CD14-positive monocyte (primary cell): ENCODE measurements at regions of chr1 and their contacts with region 1.

Region 1: DNA sequence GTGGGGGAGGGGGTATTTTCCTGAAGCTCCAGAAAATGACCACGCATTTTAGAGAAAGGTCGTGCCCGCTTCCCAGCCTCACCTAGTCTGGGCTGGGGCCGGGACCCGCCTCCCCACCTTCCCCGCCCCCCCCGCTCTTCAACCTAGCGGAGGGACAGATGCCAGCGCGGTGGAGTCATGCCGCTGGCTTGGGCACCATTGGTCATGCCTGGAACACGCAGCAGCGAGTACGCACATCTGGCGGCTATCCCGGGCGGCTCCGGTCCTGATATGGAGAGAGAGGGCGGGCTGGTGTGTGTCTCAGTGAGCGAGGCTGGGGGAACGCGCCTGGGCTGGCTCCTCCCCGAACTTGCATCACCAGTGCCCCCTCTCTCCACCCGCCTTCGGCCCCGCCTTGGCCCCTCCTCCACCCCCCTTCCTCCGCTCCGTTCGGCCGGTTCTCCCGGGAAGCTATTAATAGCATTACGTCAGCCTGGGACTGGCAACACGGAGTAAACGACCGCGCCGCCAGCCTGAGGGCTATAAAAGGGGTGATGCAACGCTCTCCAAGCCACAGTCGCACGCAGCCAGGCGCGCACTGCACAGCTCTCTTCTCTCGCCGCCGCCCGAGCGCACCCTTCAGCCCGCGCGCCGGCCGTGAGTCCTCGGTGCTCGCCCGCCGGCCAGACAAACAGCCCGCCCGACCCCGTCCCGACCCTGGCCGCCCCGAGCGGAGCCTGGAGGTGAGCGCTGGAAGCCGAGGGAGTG is at the start of gene ATF3:
- DNase-seq: peak; percentile 98 to 100 (median 100)
- H3K4me3 ChIP-seq: peak within 1 kb of the TSS; percentile 70 to 94 (median 83)
- H3K4me3 Mint-ChIP-seq: peak within 1 kb of the TSS; percentile 95 to 97
- H3K27ac ChIP-seq: peak within 1 kb of the TSS; percentile 84 to 91
- H3K27ac Mint-ChIP-seq: peak within 1 kb of the TSS; percentile 90 to 98 (median 95)
- H3K4me1 ChIP-seq: peaks cover 29 to 38% of the 10 kb centered on the region in 2 donors
- H3K4me1 Mint-ChIP-seq: peaks cover 46% of the 10 kb centered on the region
- H3K27me3 ChIP-seq: peaks cover 50 to 78% of the 10 kb centered on the region in 2 donors
- H3K27me3 Mint-ChIP-seq: peaks cover 69 to 84% (median 84%) of the 10 kb centered on the region in 3 donors
- CTCF ChIP-seq: no peak
- polyA plus RNA-seq, gene ATF3: 10.4 to 227 (median 13.3) TPM

Region 2: DNA sequence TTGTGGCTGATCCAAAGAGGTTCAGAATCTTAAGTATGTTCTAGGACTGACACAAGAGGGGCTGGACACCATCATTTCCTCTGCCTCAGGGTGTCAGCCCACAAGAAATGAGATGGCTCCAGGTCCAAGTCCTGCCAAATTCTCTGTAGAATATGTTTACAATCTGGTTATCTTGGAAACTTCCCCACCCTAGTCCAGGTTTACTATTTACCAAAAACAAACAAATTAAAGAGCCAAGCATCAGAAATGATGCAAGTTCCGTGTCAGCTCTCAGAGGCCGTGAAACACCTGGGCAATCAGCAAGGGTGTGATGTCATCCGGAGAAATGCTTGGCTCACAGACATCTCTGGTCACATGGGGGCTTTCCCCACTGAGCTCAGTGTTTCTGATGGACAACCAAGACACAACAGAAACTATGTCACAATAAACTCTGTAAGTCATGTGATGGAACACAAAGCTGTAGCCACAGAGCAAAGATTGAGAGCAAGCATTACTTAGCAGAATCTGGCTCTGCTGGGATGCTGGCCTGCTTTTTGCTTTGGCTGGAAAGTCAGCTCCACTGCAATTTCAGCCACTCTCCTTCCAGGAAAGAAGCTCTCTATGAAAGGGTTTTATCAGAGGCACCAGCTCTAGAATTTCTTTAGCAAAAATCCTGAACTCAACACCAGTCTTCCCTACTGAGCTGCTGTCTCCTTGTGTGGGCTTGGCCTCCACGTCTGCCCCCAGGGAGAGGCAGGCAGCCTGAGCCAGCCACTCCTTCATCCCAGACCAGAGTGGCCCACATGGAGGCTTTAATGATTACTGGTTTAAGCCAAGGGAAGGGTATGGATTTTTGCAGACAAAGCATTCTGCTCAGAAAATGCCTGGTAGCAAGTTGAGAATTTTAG is 119.7 kb before region 1 on chr1:
- intact Hi-C with region 1: loop called (anchors 1 to 2 kb)
- DNase-seq: peak; percentile 96 to 100 (median 99)
- H3K4me3 ChIP-seq: no peak overlapping the region
- H3K4me3 Mint-ChIP-seq: no peak overlapping the region
- H3K27ac ChIP-seq: peak overlapping the region; percentile 85 to 89
- H3K27ac Mint-ChIP-seq: peak overlapping the region; percentile 93 to 100 (median 97)
- H3K4me1 ChIP-seq: peaks cover 57 to 60% of the 10 kb centered on the region in 2 donors
- H3K4me1 Mint-ChIP-seq: peaks cover 81% of the 10 kb centered on the region
- H3K27me3 ChIP-seq: no peaks in the 10 kb centered on the region
- H3K27me3 Mint-ChIP-seq: peaks cover 1 to 7% (median 4%) of the 10 kb centered on the region in 3 donors
- CTCF ChIP-seq: no peak

Region 3: DNA sequence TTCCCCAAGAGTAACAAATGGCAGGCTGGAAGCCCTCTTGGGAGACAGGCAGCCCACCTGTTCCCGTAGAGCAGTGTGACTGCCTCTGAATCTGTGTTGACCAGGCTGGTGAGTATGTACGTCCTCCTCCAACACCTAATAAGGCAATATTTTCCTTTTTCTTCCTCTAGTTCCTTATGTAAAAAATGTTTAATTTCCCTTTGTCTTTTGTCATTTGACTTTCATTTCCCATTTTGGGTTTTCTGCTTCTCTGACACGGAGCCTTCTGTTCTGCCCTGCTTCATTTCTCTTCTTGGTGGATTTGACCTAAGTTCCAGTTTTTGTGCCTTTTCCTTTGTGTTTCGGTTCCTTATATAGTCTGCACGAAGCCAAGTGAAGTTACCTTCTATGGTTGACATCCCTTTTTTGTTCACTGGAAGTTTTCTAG is 65.6 kb before region 1 on chr1:
- intact Hi-C with region 1: loop called in 1 of 2 experiments (anchors 5 kb)
- DNase-seq: peak; percentile 88 to 96 (median 95)
- H3K4me3 ChIP-seq: peak overlapping the region in 1 of 3 experiments; percentile 51
- H3K4me3 Mint-ChIP-seq: peak overlapping the region in 1 of 2 donors; percentile 67
- H3K27ac ChIP-seq: peak overlapping the region; percentile 87 to 94
- H3K27ac Mint-ChIP-seq: peak overlapping the region; percentile 95 to 98 (median 97)
- H3K4me1 ChIP-seq: peaks cover 43 to 48% of the 10 kb centered on the region in 2 donors
- H3K4me1 Mint-ChIP-seq: peaks cover 44% of the 10 kb centered on the region
- H3K27me3 ChIP-seq: no peaks in the 10 kb centered on the region
- H3K27me3 Mint-ChIP-seq: no peaks in the 10 kb centered on the region
- CTCF ChIP-seq: no peak

Region 4: DNA sequence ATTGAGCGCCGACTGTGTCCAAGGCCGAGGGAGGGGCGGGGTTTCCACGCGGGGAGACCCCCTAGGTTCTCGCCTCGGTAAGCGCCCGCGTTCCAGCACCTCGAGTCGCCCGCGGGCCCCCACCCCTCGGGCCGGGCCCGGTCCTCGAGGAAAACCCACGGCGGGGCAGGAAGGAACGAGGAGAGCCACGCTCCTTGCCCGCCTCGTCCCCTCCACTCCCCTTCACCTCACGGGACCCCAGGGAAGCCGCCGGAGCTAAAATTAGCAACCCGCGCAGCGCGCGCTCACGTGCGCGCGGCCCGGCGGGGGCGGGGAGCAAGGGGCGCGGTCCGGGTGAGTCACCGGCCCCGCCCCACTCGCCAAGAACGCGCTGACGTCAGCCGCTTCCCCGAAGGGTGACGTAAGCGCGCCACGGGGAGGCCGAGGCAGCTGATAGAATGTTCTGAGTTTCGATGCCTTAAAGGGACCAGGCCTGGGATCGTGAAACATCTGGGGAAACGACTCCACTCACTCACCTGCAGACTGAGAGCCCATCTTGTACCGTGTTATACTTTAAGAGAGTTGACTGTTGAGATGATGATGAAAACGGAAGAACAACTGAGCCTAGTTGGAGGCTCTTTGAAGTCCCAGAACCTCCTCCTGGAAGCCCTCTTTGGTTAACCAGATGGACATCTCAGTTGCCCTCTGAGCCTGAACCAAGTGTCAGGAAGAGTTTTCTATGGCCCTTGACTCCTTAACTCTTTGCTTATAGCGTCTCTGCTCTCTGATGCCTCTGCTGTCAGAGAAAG is 49.5 kb before region 1 on chr1:
- intact Hi-C with region 1: loop called (anchors 1 kb)
- DNase-seq: peak; percentile 93 to 96 (median 96)
- H3K4me3 ChIP-seq: peak overlapping the region; percentile 49 to 79 (median 74)
- H3K4me3 Mint-ChIP-seq: peak overlapping the region; percentile 78 to 89
- H3K27ac ChIP-seq: peak overlapping the region; percentile 91 to 98
- H3K27ac Mint-ChIP-seq: peak overlapping the region; percentile 94 to 99 (median 97)
- H3K4me1 ChIP-seq: peaks cover 15 to 17% of the 10 kb centered on the region in 2 donors
- H3K4me1 Mint-ChIP-seq: peaks cover 15% of the 10 kb centered on the region
- H3K27me3 ChIP-seq: peaks cover 0 to 12% of the 10 kb centered on the region in 2 donors
- H3K27me3 Mint-ChIP-seq: peaks cover 3 to 14% (median 7%) of the 10 kb centered on the region in 3 donors
- CTCF ChIP-seq: no peak